K562 (cell line): ENCODE measurements at regions of chr5 and their contacts with region 1.

Region 1: DNA sequence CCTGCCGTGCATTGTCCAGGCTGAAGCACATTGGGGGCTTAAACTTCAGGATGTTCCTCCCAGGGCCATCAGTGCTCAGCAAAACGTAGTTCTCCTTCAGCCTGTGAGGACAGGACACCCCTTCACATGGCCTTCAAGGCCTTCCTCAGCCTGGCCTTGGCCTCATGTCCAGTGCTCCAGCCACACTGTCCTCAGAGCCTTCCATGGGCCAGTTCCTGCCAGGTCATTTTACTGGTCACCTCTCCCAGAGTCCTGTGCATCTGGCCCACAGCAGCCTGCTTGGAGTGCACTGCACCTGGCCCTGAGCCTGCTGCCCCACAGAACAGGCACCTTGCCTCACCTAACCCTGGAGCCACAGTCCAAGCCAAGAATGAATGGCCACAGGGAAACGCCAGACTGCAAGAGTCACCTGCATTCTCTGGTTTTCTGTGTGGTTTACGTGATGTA is 8.7 kb downstream of the HNRNPAB start:
- DNase-seq: no peak
- ATAC-seq: peak; percentile 23
- H3K4me3 ChIP-seq: no peak overlapping the region
- H3K27ac ChIP-seq: peak overlapping the region; percentile 36; the same call in 1 of the 3 replicates
- H3K4me1 ChIP-seq: peaks cover 2 to 15% of the 10 kb centered on the region in 2 experiments; a peak in 3 of 5 replicates
- H3K27me3 ChIP-seq: no peaks in the 10 kb centered on the region
- CTCF ChIP-seq: no peak
- EP300 ChIP-seq: no peak
- POLR2A ChIP-seq: peak; percentile 61
- RAD21 ChIP-seq: no peak

Region 2: DNA sequence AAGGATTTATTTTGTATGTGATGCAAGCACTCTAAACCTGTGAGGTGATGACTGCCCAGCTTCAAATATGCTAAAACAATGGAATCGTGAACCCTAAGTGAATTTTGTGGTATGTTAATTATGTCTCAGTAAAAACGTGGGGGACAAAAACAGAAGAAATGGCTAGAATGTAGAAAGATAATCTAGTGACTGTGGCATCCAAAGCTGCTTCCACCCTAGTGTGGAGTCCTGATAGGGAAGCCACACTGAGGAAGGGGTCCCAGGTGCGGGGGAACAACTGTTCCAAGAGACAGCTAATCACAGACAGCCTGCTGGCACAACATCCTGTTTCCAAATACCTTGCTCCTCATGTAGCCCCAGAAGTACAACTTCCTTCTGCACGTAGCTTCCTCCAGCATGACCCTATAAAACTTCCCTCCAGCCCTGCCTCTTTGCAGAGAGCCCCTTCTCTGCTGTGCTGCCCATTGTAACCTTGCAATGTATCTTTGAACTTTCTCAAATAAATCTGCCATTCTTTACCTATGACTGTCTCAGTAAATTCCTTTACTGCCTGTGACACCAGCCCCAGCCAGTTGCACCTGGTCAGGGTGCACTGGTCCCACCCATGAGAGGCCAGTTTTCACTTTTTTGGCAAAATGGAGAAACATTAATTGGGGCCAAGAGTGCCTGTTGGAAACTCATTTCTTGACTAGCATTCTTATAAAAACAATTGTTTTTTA is 30.7 kb before region 1 on chr5:
- CTCF ChIA-PET with region 1: no interaction called
- POLR2A ChIA-PET with region 1: interaction called, 10 read pairs
- in situ Hi-C with region 1: no loop called
- intact Hi-C with region 1: no loop called
- DNase-seq: peak in 2 of 4 experiments; percentile 64 to 79
- ATAC-seq: peak; percentile 62
- H3K4me3 ChIP-seq: no peak overlapping the region
- H3K27ac ChIP-seq: peak overlapping the region; percentile 52
- H3K4me1 ChIP-seq: peaks cover 15 to 20% of the 10 kb centered on the region in 2 experiments
- H3K27me3 ChIP-seq: no peaks in the 10 kb centered on the region
- CTCF ChIP-seq: no peak
- EP300 ChIP-seq: peak; percentile 69; the same call in 1 of the 2 replicates
- POLR2A ChIP-seq: no peak
- RAD21 ChIP-seq: no peak

Region 3: GRCh38 chr5:178196986-178197385 is 16.0 kb before region 1 on chr5:
- CTCF ChIA-PET with region 1: no interaction called
- POLR2A ChIA-PET with region 1: interaction called, 11 read pairs
- in situ Hi-C with region 1: no loop called
- intact Hi-C with region 1: no loop called
- DNase-seq: peak; percentile 62 to 70 (median 66)
- ATAC-seq: peak; percentile 94
- H3K4me3 ChIP-seq: no peak overlapping the region
- H3K27ac ChIP-seq: no peak overlapping the region
- H3K4me1 ChIP-seq: peaks cover 0 to 8% of the 10 kb centered on the region in 2 experiments; a peak in 3 of 5 replicates
- H3K27me3 ChIP-seq: peaks cover 5 to 16% of the 10 kb centered on the region in 2 experiments; a peak in 3 of 5 replicates
- CTCF ChIP-seq: peak; percentile 71 to 85 (median 72)
- EP300 ChIP-seq: no peak
- POLR2A ChIP-seq: no peak
- RAD21 ChIP-seq: peak in 1 of 2 experiments; percentile 60; a peak in 2 of 4 replicates